ENCODE measurements at regions of chr1 and their contacts with region 1.

Region 1: DNA sequence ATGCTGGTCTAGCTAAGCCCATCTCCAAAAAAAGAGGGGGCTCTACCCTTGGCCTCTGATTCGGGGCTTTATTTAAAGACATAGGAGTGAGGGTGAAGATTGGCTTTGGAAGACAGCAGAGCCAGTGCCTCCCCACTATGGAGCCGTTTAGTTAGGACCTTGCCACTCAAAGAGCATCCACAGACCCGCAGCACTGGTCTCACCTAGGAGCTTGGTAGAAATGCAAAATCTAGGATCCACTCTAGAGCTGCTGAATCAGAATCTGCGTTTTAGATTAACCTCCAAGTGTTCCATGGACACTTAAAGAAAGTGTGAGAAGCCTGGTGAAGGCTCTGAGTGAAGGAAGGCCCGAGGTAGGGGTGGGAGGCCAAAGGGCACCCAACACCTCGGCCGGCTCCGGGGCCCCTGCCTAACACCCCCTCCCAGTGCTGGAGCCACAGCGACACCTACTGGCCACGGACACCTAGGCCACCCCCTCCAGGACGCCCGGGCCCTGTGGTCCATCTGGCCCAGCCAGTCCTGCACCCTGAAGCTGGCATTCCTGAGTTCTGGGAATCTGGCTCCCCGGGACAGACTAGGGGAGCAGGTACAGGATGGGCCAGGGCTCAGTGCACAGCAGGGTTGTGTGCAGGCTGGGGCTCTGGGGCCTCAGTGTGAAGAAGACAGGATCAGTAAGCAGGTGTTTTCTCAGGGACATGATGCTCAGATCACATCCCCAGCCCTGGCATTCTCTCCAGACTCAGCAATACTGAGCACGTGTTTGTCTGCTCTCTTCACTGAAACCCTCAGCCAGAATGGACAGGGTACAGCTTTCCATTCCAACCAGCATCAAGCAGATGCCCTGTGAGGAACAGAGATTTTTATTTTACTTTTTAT is 79.2 kb downstream of the TMEM53 start:
- DNase-seq: peak; percentile 42
- H3K4me3 ChIP-seq: no peak overlapping the region
- H3K27ac ChIP-seq: no peak overlapping the region
- H3K4me1 ChIP-seq: no peaks in the 10 kb centered on the region
- H3K27me3 ChIP-seq: peaks cover 0 to 7% of the 10 kb centered on the region in 2 experiments
- CTCF ChIP-seq: peak; percentile 86 to 94
- POLR2A ChIP-seq: no peak

Region 2: GRCh38 chr1:44002606-44003157 is 592.4 kb before region 1 on chr1:
- CTCF ChIA-PET with region 1: interaction called, 11 read pairs
- POLR2A ChIA-PET with region 1: no interaction called
- dilution Hi-C with region 1: no loop called
- intact Hi-C with region 1: loop called (anchors 5 kb)
- DNase-seq: no peak
- H3K4me3 ChIP-seq: no peak overlapping the region
- H3K27ac ChIP-seq: no peak overlapping the region
- H3K4me1 ChIP-seq: no peaks in the 10 kb centered on the region
- H3K27me3 ChIP-seq: no peaks in the 10 kb centered on the region
- CTCF ChIP-seq: peak in 1 of 2 donors; percentile 26
- POLR2A ChIP-seq: no peak

Region 3: GRCh38 chr1:44010935-44011471 is 584.1 kb before region 1 on chr1:
- CTCF ChIA-PET with region 1: interaction called, 11 read pairs
- POLR2A ChIA-PET with region 1: no interaction called
- dilution Hi-C with region 1: no loop called
- intact Hi-C with region 1: loop called (anchors 5 kb)
- DNase-seq: no peak
- H3K4me3 ChIP-seq: no peak overlapping the region
- H3K27ac ChIP-seq: no peak overlapping the region
- H3K4me1 ChIP-seq: no peaks in the 10 kb centered on the region
- H3K27me3 ChIP-seq: peaks cover 0 to 4% of the 10 kb centered on the region in 2 experiments
- CTCF ChIP-seq: no peak
- POLR2A ChIP-seq: no peak

Region 4: DNA sequence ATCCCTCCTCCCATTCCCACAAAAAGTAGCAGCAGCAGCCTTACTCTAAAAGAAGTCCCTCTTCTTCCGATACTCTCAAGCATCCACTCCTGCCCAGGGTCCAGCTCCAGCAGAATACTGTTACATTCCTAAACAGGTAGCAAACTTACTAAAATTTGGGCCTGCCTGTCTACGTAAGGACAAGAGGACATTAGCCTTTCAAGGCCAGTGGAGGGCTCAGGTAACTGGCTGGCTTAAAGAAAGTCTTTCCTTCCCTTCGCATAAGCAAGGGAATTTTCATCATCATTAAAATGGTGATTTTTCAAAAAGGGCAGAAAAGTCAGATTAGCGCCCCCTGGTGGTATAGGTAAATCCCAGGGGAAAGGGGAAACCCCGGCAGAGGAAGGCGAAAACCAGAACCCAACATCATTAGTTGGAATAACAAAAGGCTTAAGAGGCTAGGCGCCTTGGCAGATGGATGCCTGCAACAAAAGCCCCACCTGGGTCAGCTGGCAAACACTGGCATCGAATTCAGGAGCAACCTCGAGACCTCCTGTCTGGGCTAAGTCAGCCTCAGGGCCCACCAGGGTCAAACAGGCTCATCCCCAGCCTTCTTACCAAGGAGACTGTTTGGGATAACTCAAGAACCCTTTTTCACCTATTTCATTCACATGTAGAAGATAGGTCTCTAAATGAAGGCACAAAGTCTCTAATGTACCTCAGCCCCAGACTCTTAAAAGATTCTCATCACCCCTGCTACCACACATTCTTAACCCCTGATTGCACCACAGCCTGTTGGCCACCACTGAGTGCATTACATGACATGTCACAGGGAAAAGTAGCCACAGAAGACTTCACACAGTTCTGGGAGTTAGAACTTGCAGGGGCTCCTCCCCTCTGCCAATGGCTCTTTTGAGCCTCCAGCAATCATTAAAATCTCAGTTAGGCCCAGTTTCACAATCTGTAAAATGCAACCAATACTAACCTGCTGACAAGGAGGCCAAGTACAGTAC is 276.7 kb before region 1 on chr1:
- CTCF ChIA-PET with region 1: interaction called, 5 read pairs
- POLR2A ChIA-PET with region 1: no interaction called
- dilution Hi-C with region 1: no loop called
- intact Hi-C with region 1: loop called (anchors 1 kb)
- DNase-seq: peak; percentile 33
- H3K4me3 ChIP-seq: no peak overlapping the region
- H3K27ac ChIP-seq: no peak overlapping the region
- H3K4me1 ChIP-seq: no peaks in the 10 kb centered on the region
- H3K27me3 ChIP-seq: no peaks in the 10 kb centered on the region
- CTCF ChIP-seq: peak; percentile 76 to 83
- POLR2A ChIP-seq: no peak

Region 5: GRCh38 chr1:44500181-44501046 is 94.7 kb before region 1 on chr1:
- CTCF ChIA-PET with region 1: interaction called, 11 read pairs
- POLR2A ChIA-PET with region 1: no interaction called
- dilution Hi-C with region 1: no loop called
- intact Hi-C with region 1: loop called (anchors 1 kb)
- DNase-seq: peak; percentile 59
- H3K4me3 ChIP-seq: no peak overlapping the region
- H3K27ac ChIP-seq: no peak overlapping the region
- H3K4me1 ChIP-seq: no peaks in the 10 kb centered on the region
- H3K27me3 ChIP-seq: peaks cover 26 to 29% of the 10 kb centered on the region in 2 experiments
- CTCF ChIP-seq: peak in 1 of 2 donors; percentile 48
- POLR2A ChIP-seq: no peak

Region 6: DNA sequence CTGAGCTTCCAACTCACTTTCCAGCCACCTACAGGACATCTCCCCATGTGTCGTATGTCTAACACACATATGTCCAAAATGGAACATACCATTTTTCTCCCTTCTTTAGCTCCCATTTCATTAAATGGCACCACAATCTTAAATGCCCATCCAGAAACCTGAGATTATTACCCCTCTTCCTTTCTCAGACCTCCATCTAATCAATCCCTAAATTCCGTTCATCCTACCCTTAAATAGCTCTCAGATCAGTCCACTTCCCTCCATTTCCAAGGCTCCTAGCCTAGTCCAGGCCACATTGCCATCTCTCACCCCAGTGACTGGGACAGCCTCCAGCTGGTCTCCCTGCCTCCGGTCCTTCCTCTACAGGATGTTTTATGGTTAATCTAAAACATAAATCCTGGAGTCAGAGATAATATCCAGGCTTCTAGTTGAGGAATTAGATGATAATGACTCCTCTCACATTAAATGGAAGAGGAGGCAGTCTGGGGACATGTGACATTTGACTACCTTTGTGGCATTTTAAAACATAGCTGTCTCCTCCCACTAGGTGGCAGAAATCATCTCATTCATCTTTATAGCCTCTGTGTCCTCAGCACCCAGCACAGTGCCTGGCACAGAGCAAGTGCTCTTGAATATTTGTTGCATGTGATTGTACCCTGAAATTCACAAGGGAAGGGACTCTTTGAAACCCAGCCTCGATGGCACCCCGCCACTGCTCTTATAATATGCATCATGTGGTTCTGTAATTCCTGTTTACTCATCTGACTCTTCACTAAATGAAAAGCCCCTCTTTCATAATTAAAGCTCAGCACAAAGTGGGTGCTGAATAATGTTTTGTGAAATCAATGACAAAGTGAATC is 23.2 kb before region 1 on chr1:
- CTCF ChIA-PET with region 1: interaction called, 23 read pairs
- POLR2A ChIA-PET with region 1: no interaction called
- dilution Hi-C with region 1: no loop called
- intact Hi-C with region 1: loop called (anchors 1 kb)
- DNase-seq: peak; percentile 8
- H3K4me3 ChIP-seq: no peak overlapping the region
- H3K27ac ChIP-seq: no peak overlapping the region
- H3K4me1 ChIP-seq: no peaks in the 10 kb centered on the region
- H3K27me3 ChIP-seq: peaks cover 9 to 10% of the 10 kb centered on the region in 2 experiments
- CTCF ChIP-seq: peak; percentile 35 to 41
- POLR2A ChIP-seq: no peak

Region 7: GRCh38 chr1:44581205-44581604 is 13.9 kb before region 1 on chr1:
- CTCF ChIA-PET with region 1: interaction called, 11 read pairs
- POLR2A ChIA-PET with region 1: no interaction called
- dilution Hi-C with region 1: no loop called
- intact Hi-C with region 1: no loop called
- DNase-seq: no peak
- H3K4me3 ChIP-seq: no peak overlapping the region
- H3K27ac ChIP-seq: no peak overlapping the region
- H3K4me1 ChIP-seq: no peaks in the 10 kb centered on the region
- H3K27me3 ChIP-seq: peaks cover 6 to 12% of the 10 kb centered on the region in 2 experiments
- CTCF ChIP-seq: no peak
- POLR2A ChIP-seq: no peak

Measured in endothelial cell of umbilical vein (primary cell).